Mammary epithelial cell (primary cell): ENCODE measurements at regions of chr9 and their contacts with region 1.

Region 1: DNA sequence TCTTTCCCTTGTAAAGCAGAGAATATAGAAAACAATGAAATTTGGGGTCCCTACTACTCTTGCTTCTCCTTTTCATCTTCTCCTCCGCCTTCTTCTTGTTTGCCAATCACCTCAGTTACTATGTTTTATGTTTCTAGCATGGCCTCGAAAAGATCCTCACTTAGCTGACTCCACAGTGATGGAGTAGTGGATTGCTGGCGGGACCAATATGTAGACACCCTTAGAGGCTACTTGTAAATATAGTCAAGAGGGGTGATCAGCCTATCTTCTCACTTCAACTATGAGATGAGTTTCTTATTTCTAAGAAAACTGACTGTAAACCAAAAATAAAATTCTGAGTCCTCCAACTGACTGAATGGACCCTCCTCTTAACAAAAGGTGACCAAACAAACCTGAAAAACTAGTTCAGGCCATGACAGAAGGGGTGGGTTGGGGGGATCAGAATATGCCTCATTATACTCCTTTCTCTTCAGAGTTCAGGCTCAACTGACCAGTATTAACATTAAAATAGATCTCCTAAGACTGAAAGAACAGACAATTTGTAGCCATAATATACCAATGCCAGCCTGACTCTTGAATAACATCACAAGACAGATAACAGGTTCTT is 829.0 kb downstream of the TLE4 start:
- DNase-seq: no peak
- H3K4me3 ChIP-seq: no peak overlapping the region
- H3K27ac ChIP-seq: no peak overlapping the region
- H3K4me1 ChIP-seq: no peaks in the 10 kb centered on the region
- H3K27me3 ChIP-seq: no peaks in the 10 kb centered on the region
- CTCF ChIP-seq: no peak

Region 2: DNA sequence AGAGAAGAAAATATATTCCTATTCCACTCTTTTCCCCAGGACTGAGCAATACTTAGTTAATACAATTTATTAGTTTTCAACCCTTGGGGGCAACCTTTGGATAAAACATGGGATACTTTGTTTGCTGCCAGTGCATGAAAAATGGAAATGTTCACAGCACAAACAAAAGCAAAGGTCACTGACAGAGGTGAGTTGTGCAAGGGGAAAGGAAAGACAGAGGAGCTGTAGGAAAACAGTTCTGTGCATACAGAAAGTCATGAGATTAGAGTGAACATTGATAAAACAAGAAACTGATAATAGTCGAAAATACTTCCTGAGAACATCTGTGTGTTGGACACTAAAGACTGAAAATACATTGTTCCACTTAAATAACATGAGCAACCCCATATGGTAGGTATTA is 49.1 kb before region 1 on chr9:
- CTCF ChIA-PET with region 1: no interaction called
- dilution Hi-C with region 1: loop called (anchors 5 kb)
- in situ Hi-C with region 1: no loop called
- intact Hi-C with region 1: no loop called
- DNase-seq: no peak
- H3K4me3 ChIP-seq: no peak overlapping the region
- H3K27ac ChIP-seq: no peak overlapping the region
- H3K4me1 ChIP-seq: no peaks in the 10 kb centered on the region
- H3K27me3 ChIP-seq: no peaks in the 10 kb centered on the region
- CTCF ChIP-seq: no peak

Region 3: DNA sequence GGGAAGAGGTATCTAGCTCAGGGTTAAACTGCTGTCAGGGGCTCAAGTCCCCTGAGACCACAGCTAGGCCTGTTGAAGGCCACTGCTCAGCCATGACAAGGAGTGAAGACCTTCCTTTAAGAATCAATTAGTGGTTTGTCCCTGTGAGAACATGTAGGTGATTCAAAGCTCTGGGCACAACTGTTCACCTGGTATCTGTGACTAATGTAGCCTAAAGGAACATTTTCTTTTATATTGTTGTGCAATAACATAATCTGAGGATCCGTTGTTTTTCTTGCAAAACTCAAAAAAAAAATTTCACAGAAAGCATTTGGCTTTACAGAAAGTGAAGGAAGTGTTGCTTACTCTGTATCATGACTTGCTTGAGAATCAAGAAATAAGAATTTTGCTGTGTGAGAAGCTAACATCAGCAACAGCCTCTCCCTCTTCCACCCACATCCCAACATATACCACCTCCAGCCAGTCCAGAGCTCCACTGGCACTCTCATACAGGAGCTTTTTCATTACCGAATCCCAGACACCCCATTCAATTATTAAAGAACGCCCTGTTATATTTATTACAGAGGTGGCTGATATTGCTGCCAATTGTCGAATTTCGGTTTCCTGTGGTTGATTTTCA is 21.9 kb before region 1 on chr9:
- CTCF ChIA-PET with region 1: no interaction called
- dilution Hi-C with region 1: no loop called
- in situ Hi-C with region 1: no loop called
- intact Hi-C with region 1: no loop called
- DNase-seq: peak; percentile 89
- H3K4me3 ChIP-seq: no peak overlapping the region
- H3K27ac ChIP-seq: no peak overlapping the region
- H3K4me1 ChIP-seq: peaks cover 23% of the 10 kb centered on the region
- H3K27me3 ChIP-seq: no peaks in the 10 kb centered on the region
- CTCF ChIP-seq: no peak

Region 4: DNA sequence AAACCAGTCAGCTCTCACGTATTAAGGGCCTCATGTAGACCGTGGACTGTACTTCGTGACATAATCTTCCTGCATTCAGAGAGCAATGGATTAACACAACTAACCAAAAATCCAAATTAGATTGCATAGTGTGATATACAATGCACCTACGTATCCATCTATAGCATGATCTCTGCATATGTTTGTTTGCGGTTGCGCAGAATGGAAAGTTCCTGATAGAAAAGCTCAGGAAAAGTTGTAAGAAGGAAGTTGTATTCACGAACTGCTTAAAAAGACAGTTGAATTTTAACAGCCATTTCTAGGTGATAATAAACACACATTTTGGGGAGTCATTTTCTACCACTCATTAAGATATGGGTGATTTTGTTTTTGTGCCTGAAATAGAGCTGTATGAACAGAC is 40.0 kb after region 1 on chr9:
- CTCF ChIA-PET with region 1: no interaction called
- dilution Hi-C with region 1: no loop called
- in situ Hi-C with region 1: no loop called
- intact Hi-C with region 1: no loop called
- DNase-seq: peak; percentile 7
- H3K4me3 ChIP-seq: no peak overlapping the region
- H3K27ac ChIP-seq: no peak overlapping the region
- H3K4me1 ChIP-seq: no peaks in the 10 kb centered on the region
- H3K27me3 ChIP-seq: peaks cover 3% of the 10 kb centered on the region
- CTCF ChIP-seq: no peak